CD4-positive, alpha-beta T cell (primary cell): ENCODE measurements at regions of chr4 and their contacts with region 1.

Region 1: GRCh38 chr4:158729716-158730559 is 6.7 kb upstream of the PPID start:
- DNase-seq: peak; percentile 20 to 77 (median 32)
- ATAC-seq: peak; percentile 85
- H3K4me3 ChIP-seq: no peak overlapping the region
- H3K4me3 Mint-ChIP-seq: no peak overlapping the region
- H3K27ac ChIP-seq: no peak overlapping the region
- H3K27ac Mint-ChIP-seq: no peak overlapping the region
- H3K4me1 ChIP-seq: no peaks in the 10 kb centered on the region
- H3K4me1 Mint-ChIP-seq: no peaks in the 10 kb centered on the region
- H3K27me3 ChIP-seq: peaks cover 2 to 14% of the 10 kb centered on the region in 2 experiments
- H3K27me3 Mint-ChIP-seq: peaks cover 30% of the 10 kb centered on the region
- CTCF ChIP-seq: peak; percentile 78

Region 2: GRCh38 chr4:158768555-158769174 is 38.7 kb after region 1 on chr4 and contains the start of gene FNIP2:
- CTCF ChIA-PET with region 1: interaction called, 4 read pairs
- POLR2A ChIA-PET with region 1: no interaction called
- intact Hi-C with region 1: loop called in 1 of 2 experiments (anchors 2 kb)
- DNase-seq: peak; percentile 39 to 90 (median 66)
- ATAC-seq: peak; percentile 78
- H3K4me3 ChIP-seq: peak within 1 kb of the TSS; percentile 69
- H3K4me3 Mint-ChIP-seq: peak within 1 kb of the TSS; percentile 98
- H3K27ac ChIP-seq: peak within 1 kb of the TSS; percentile 32 to 62
- H3K27ac Mint-ChIP-seq: peak within 1 kb of the TSS; percentile 91
- H3K4me1 ChIP-seq: peaks cover 10% of the 10 kb centered on the region
- H3K4me1 Mint-ChIP-seq: peaks cover 42% of the 10 kb centered on the region
- H3K27me3 ChIP-seq: no peaks in the 10 kb centered on the region
- H3K27me3 Mint-ChIP-seq: no peaks in the 10 kb centered on the region
- CTCF ChIP-seq: no peak
- total RNA-seq, gene FNIP2: 7.5 to 7.7 TPM

Region 3: DNA sequence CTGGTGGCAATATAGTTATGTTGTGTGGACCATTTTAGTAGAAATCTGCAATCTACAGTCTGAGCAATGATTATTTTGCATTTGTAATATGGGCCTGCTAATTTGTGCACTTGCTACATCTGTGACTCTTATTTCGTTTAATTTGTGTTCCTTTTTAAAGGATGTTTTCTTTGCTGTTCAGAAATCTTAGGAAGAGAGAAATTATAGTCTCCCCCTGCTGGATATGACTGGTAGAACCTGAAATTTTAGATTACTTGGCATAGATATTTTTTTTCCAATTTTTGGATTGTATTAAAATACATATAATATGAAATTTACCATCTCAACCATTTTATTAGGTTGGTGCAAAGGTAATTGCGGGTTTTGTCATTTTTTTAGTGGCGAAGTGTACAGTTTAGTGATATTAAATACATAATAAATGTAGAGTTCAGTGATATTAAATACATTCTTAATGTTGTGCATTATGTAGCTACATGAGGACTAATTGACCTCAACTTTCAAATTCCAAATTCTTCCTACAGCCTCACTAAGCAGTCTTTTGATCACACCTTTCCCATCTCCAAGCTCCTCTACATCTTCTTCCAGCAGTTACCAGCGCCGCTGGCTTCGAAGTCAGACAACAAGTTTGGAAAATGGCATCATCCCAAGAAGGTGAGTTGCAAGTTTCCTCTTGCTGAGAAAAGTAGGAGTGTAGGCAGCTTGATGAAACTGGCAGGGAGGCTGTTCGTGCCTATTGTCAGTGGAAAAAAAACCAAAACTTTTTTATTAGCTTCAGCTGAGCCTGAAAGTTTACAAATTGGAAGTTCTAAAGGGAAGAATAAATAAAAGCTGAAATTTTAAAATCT is 121.1 kb after region 1 on chr4:
- CTCF ChIA-PET with region 1: interaction called, 3 read pairs
- POLR2A ChIA-PET with region 1: no interaction called
- intact Hi-C with region 1: loop called (anchors 1 kb)
- DNase-seq: peak in 3 of 14 experiments; percentile 42 to 56 (median 51)
- ATAC-seq: peak; percentile 37
- H3K4me3 ChIP-seq: no peak overlapping the region
- H3K4me3 Mint-ChIP-seq: no peak overlapping the region
- H3K27ac ChIP-seq: no peak overlapping the region
- H3K27ac Mint-ChIP-seq: peak overlapping the region; percentile 3
- H3K4me1 ChIP-seq: no peaks in the 10 kb centered on the region
- H3K4me1 Mint-ChIP-seq: peaks cover 12% of the 10 kb centered on the region
- H3K27me3 ChIP-seq: no peaks in the 10 kb centered on the region
- H3K27me3 Mint-ChIP-seq: no peaks in the 10 kb centered on the region
- CTCF ChIP-seq: peak; percentile 79

Region 4: DNA sequence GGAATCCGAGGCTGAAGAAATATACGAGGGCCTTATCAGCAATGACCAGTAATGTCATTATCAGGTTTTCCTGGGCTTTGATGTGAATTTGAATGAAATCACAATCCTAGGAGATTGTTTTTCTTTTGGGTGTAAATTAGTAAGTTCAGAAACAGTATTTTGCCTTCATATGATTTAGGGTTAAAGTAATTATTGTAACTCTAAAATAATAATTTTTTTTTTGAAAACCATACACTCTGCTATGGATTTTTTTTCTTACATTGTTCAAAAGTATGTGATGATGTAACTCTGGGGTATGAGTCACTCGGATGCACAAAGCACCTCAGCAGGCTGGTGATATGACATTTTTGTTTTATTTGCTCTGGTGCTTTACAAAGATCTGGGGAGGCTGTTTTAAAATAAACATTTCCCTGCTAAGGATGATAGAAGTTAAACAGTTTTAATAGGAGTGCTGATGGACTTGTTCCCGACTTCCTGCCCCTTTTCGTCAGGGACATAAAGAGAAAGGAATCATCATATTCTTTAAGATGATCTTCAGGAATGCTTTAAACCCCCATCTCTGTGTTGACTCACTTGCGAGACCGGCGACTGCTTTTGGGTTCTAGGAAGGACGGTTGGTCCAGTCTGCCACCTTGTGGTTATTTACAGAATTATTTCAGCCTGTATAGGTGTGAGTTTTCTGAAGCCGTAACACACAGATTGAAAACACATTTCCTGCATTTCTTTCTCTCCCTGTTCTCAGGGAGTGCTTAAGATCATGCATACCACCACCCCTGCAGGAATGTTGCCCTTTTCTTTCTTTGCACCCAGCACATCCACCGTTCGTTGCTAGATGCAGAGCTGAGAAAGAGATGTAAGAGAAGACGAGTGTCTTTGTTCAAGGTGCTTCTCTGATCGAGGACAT is 445.4 kb after region 1 on chr4:
- CTCF ChIA-PET with region 1: no interaction called
- POLR2A ChIA-PET with region 1: no interaction called
- intact Hi-C with region 1: loop called (anchors 1 to 2 kb)
- DNase-seq: peak; percentile 27 to 83 (median 38)
- ATAC-seq: peak; percentile 94
- H3K4me3 ChIP-seq: no peak overlapping the region
- H3K4me3 Mint-ChIP-seq: no peak overlapping the region
- H3K27ac ChIP-seq: no peak overlapping the region
- H3K27ac Mint-ChIP-seq: no peak overlapping the region
- H3K4me1 ChIP-seq: peaks cover 6% of the 10 kb centered on the region
- H3K4me1 Mint-ChIP-seq: peaks cover 49% of the 10 kb centered on the region
- H3K27me3 ChIP-seq: no peaks in the 10 kb centered on the region
- H3K27me3 Mint-ChIP-seq: no peaks in the 10 kb centered on the region
- CTCF ChIP-seq: peak; percentile 87

Region 5: DNA sequence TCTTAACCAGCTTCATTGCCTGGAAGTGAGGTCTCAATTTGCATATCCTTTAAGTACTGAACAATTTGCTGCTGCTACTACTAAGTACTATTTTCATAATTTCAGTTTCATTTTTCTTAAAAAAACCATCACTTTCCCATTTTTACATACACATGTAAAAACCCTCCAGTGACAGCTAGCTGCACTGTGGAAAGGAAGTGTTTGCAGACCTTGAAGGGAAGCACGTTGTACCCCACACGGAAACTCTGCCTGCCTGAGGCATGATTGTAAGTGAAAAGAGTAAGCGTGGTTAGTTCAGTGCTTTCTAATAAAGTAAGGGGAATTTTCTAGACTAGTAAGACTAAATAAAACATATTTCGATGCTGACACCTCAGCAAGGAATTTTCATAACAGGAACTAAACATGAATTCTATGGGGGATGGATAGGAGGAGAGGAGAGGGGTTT is 476.5 kb after region 1 on chr4:
- CTCF ChIA-PET with region 1: no interaction called
- POLR2A ChIA-PET with region 1: no interaction called
- intact Hi-C with region 1: loop called (anchors 1 to 2 kb)
- DNase-seq: peak in 4 of 14 experiments; percentile 10 to 26 (median 16)
- ATAC-seq: no peak
- H3K4me3 ChIP-seq: no peak overlapping the region
- H3K4me3 Mint-ChIP-seq: no peak overlapping the region
- H3K27ac ChIP-seq: no peak overlapping the region
- H3K27ac Mint-ChIP-seq: no peak overlapping the region
- H3K4me1 ChIP-seq: peaks cover 10% of the 10 kb centered on the region
- H3K4me1 Mint-ChIP-seq: peaks cover 23% of the 10 kb centered on the region
- H3K27me3 ChIP-seq: no peaks in the 10 kb centered on the region
- H3K27me3 Mint-ChIP-seq: no peaks in the 10 kb centered on the region
- CTCF ChIP-seq: no peak